Activated CD8-positive, alpha-beta T cell treated with anti-CD3 and anti-CD28 coated beads for 36 hours (primary cell): ENCODE measurements at regions of chr3 and their contacts with region 1.

Region 1: DNA sequence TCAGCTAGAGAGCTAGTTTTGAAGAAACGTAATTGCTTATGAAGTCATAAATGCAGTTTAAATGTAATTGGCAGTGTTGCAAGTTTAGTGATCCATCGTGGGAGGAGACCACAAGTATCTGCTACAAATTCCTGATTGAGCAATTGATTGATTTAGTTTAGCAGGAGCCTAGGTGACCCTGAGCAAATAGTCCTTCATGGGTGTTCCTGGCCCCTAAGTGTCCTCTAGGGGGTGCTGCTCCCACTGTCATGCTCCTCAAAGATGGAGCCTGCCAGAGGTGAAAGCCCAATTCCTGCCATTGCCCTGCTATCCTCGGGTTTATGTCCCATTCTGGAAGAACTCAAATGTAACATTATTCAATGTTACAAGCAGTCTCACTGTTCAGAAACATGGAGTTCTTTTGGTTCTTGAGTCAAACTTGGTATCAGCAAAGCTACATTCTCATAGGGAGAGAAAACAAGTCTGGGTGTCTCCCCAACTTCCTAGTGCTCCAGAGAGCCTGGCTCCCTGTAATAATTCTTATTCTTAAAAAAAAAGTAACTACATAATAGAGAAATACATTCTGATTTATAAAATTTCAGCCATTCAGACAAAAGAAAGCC is 29.8 kb upstream of the SENP5 start:
- DNase-seq: peak; percentile 88
- ATAC-seq: peak; percentile 94
- H3K4me3 Mint-ChIP-seq: no peak overlapping the region
- H3K27ac Mint-ChIP-seq: no peak overlapping the region
- H3K4me1 Mint-ChIP-seq: no peaks in the 10 kb centered on the region
- H3K27me3 Mint-ChIP-seq: no peaks in the 10 kb centered on the region
- CTCF ChIP-seq: peak; percentile 88

Region 2: GRCh38 chr3:196432137-196432879 is 405.6 kb before region 1 on chr3 and contains the start of gene UBXN7:
- CTCF ChIA-PET with region 1: no interaction called
- POLR2A ChIA-PET with region 1: no interaction called
- intact Hi-C with region 1: no loop called
- DNase-seq: peak; percentile 95
- ATAC-seq: peak; percentile 91
- H3K4me3 Mint-ChIP-seq: peak within 1 kb of the TSS; percentile 78
- H3K27ac Mint-ChIP-seq: peak within 1 kb of the TSS; percentile 78
- H3K4me1 Mint-ChIP-seq: peaks cover 18% of the 10 kb centered on the region
- H3K27me3 Mint-ChIP-seq: no peaks in the 10 kb centered on the region
- CTCF ChIP-seq: no peak
- total RNA-seq, gene UBXN7: 58.4 to 63.7 TPM

Region 3: GRCh38 chr3:196813903-196814302 is 24.0 kb before region 1 on chr3:
- CTCF ChIA-PET with region 1: interaction called, 26 read pairs
- POLR2A ChIA-PET with region 1: no interaction called
- intact Hi-C with region 1: no loop called
- DNase-seq: no peak
- ATAC-seq: no peak
- H3K4me3 Mint-ChIP-seq: no peak overlapping the region
- H3K27ac Mint-ChIP-seq: no peak overlapping the region
- H3K4me1 Mint-ChIP-seq: peaks cover 2% of the 10 kb centered on the region
- H3K27me3 Mint-ChIP-seq: no peaks in the 10 kb centered on the region
- CTCF ChIP-seq: no peak

Region 4: DNA sequence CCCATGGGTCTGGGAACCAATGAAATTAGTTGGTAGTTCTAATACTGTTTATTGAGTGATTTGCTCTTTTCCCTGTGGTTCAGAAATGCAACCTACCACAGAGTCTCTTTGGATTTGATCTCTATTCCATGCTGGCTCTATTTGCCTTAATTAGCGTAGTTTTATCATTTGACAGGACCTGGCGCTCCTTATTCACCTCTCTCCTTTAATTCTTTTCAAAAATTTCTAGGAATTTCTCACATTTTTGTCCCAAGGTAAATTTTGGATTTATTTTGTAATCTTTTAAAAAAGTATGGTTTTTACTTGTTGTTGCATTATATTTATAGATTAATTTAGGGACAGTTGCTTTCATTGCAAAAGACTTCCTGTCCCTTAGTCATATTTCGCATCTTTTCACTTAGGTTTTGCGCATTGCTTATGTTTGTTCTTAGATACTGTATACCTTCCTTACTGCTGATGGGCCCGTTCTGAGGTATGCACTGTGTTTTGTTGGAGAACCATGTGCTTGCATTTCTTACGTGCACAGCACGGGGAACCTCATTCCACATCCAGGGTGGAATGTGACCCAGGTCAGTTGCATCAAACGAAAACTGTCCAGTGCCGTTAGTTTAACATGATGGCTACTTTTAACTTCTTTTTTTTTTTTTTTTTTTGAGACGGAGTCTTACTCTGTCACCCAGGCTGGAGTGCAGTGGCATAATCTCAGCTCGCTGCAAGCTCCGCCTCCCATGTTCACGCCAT is 56.8 kb after region 1 on chr3:
- CTCF ChIA-PET with region 1: no interaction called
- POLR2A ChIA-PET with region 1: no interaction called
- intact Hi-C with region 1: no loop called
- DNase-seq: no peak
- ATAC-seq: no peak
- H3K4me3 Mint-ChIP-seq: no peak overlapping the region
- H3K27ac Mint-ChIP-seq: no peak overlapping the region
- H3K4me1 Mint-ChIP-seq: peaks cover 11% of the 10 kb centered on the region
- H3K27me3 Mint-ChIP-seq: no peaks in the 10 kb centered on the region
- CTCF ChIP-seq: no peak

Region 5: DNA sequence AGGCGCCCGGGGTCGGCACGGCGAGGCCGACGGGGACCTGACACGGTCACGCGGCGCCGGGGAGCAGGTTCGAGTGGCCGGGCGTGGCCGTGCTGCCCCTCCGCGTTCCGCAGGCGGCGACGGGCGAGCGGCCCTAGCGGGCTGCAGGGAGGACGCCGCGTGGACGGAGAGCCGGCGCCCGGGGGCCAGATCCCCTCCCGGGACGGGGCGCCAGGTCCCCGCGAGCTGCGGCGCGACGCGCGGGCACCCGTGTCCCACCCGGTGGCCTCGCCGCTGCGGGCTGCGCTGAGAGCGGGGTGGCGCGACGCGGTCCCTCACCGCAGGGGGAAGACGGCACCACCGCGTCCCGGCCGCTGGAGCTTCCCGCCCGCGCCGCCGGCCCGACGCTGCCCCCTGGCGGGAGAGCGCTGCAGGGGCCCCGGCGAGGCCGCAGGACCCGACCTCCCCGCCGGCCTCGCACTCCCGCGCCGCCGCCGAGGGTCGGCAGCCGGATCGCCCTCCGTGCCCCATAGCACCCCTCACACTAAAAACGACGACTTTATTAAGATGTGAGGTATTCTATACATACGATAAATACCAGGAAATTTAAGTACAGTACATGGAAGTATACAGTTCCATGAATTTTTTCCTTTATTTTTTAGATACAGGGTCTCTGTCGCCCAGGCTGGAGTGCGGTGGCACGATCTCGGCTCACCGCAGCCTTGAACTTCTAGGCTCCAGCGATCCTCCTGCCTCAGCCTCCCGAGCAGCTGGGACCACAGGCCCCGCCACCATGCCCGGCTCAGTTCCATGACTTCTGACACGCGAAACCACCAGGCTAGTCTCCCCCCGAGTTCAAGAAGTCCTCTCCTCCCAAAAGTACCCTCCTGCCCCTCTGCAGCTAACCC is 132.0 kb after region 1 on chr3:
- CTCF ChIA-PET with region 1: interaction called, 27 read pairs
- POLR2A ChIA-PET with region 1: interaction called, 4 read pairs
- intact Hi-C with region 1: loop called (anchors 5 kb)
- DNase-seq: peak; percentile 67
- ATAC-seq: peak; percentile 78
- H3K4me3 Mint-ChIP-seq: peak overlapping the region; percentile 65
- H3K27ac Mint-ChIP-seq: peak overlapping the region; percentile 60
- H3K4me1 Mint-ChIP-seq: peaks cover 7% of the 10 kb centered on the region
- H3K27me3 Mint-ChIP-seq: peaks cover 13% of the 10 kb centered on the region
- CTCF ChIP-seq: peak; percentile 87

Region 6: DNA sequence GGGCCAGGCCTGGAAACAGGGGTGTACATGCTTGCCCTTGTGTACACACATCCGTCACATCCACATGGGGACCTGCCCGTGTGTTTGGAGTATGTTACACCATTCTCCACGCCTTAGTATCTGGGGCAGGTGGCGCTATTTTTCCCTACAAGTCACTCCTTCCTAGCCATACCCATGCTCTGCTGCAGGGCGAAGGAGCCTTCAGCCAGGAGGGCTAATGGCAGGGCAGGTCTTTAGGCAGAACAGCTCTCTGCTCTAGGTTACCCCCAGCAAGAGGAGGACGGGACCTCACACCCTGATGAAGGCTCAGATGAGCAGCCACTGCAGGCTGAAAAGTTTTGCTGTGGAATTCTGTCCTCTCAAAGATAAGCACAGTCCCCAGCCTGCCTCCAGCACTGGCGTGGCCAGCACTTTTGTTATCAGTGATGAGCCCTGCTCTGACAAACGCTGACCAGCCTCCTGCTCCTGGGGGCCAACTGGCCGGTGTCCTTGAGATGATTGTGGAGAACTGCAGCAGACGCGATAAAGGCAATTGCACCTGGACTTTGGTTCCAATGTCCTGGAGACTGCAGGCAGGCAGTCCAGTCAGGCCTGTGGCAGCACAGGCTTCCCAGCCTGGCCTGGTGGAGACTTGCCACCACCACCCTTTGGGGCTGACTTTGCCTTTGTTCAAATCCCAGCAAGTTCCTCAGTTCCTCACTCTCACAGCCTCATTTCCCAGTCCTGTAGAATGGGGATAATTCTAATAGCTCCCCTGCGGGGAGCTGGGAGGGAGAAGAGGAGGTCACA is 150.5 kb after region 1 on chr3:
- CTCF ChIA-PET with region 1: no interaction called
- POLR2A ChIA-PET with region 1: no interaction called
- intact Hi-C with region 1: no loop called
- DNase-seq: no peak
- ATAC-seq: no peak
- H3K4me3 Mint-ChIP-seq: no peak overlapping the region
- H3K27ac Mint-ChIP-seq: no peak overlapping the region
- H3K4me1 Mint-ChIP-seq: no peaks in the 10 kb centered on the region
- H3K27me3 Mint-ChIP-seq: no peaks in the 10 kb centered on the region
- CTCF ChIP-seq: no peak